ENCODE measurements at regions of chr3 and their contacts with region 1.

Region 1: GRCh38 chr3:77038468-77038929 is 1.4 kb upstream of the ROBO2 start:
- DNase-seq: peak; percentile 64 to 72
- H3K4me3 ChIP-seq: peak overlapping the region; percentile 78 to 89 (median 82)
- H3K27ac ChIP-seq: no peak overlapping the region
- H3K4me1 ChIP-seq: peaks cover 0 to 9% (median 5%) of the 10 kb centered on the region in 4 experiments; a peak in 5 of 7 replicates
- H3K27me3 ChIP-seq: peaks cover 0 to 6% (median 5%) of the 10 kb centered on the region in 4 experiments; a peak in 5 of 7 replicates
- CTCF ChIP-seq: peak; percentile 5 to 81 (median 68)
- EP300 ChIP-seq: peak in 1 of 2 experiments; percentile 30; a peak in 1 of 3 replicates
- POLR2A ChIP-seq: no peak
- RAD21 ChIP-seq: peak; percentile 89 to 96

Region 2: DNA sequence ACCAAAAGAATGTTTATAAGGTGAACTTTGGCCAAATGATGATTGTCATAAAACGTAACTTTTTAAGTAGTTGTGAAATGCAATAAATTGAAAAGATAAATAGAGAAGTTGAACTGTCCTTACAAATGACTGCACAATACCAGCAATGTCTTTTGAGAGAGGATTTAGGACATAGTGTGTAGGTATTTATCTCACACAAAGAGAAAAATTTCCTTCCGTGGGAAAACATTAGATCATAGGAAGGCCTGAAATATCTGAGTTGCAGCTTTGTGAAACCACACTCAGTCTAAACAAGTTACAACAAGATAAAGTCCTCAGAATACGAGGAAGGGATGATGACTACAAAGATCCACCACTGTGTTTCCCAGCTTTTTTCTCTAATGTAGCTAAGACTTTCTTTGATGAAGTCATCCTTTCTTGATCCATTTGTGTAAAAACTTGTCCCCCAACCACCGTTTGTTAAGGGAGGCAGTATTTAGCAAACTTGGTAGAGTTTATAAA is 17.4 kb after region 1 on chr3:
- CTCF ChIA-PET with region 1: interaction called, 13 read pairs
- POLR2A ChIA-PET with region 1: no interaction called
- DNase-seq: no peak
- H3K4me3 ChIP-seq: no peak overlapping the region
- H3K27ac ChIP-seq: no peak overlapping the region
- H3K4me1 ChIP-seq: peaks cover 0 to 7% (median 0%) of the 10 kb centered on the region in 4 experiments; a peak in 1 of 7 replicates
- H3K27me3 ChIP-seq: no peaks in the 10 kb centered on the region
- CTCF ChIP-seq: no peak
- EP300 ChIP-seq: no peak
- POLR2A ChIP-seq: no peak
- RAD21 ChIP-seq: no peak

Region 3: GRCh38 chr3:77254967-77255831 is 216.7 kb after region 1 on chr3:
- CTCF ChIA-PET with region 1: interaction called, 16 read pairs
- POLR2A ChIA-PET with region 1: interaction called, 3 read pairs
- DNase-seq: peak in 1 of 2 experiments; percentile 62
- H3K4me3 ChIP-seq: no peak overlapping the region
- H3K27ac ChIP-seq: no peak overlapping the region
- H3K4me1 ChIP-seq: no peaks in the 10 kb centered on the region
- H3K27me3 ChIP-seq: no peaks in the 10 kb centered on the region
- CTCF ChIP-seq: peak in 2 of 3 experiments; percentile 67 to 69; a peak in 3 of 4 replicates
- EP300 ChIP-seq: no peak
- POLR2A ChIP-seq: no peak
- RAD21 ChIP-seq: peak; percentile 91 to 92